Activated T-helper 2 cell treated with anti-CD3 and anti-CD28 coated beads, Interferon-gamma antibody, Interleukin-2, Interleukin-4, amounts not matched to agents 10 μg/mL and 5 μg/mL and 100 μg/mL, durations not matched to agents 14 hours and 24 hours and 36 hours (primary cell): ENCODE measurements at regions of chr11 and their contacts with region 1.

Region 1: DNA sequence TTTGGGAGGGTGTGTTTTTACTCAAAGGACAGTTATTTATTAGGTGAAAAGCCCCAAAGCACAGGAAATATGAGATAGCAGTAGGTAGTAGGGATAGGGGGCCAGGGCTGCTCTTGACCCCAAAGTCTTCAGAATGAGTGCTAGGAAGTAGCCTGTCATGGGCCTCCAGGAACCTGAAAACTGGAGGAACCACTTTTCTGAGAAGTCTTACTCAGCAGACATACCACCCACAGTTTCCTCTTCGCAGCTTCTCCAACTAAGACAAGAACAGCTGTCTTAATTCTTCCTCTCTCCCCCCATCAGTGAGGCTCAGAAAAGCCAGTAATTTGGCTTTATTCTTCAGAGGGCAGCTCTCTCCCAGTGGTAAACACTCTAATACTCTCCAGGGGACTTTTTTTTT is 84.0 kb upstream of the CTSC start:
- DNase-seq: peak; percentile 24
- H3K4me3 Mint-ChIP-seq: peak overlapping the region; percentile 66
- H3K27ac Mint-ChIP-seq: peak overlapping the region; percentile 87
- H3K4me1 Mint-ChIP-seq: peaks cover 62% of the 10 kb centered on the region
- H3K27me3 Mint-ChIP-seq: no peaks in the 10 kb centered on the region

Region 2: GRCh38 chr11:88179971-88180629 is 241.4 kb before region 1 on chr11:
- intact Hi-C with region 1: loop called (anchors 2 kb)
- DNase-seq: no peak
- H3K4me3 Mint-ChIP-seq: no peak overlapping the region
- H3K27ac Mint-ChIP-seq: no peak overlapping the region
- H3K4me1 Mint-ChIP-seq: peaks cover 35% of the 10 kb centered on the region
- H3K27me3 Mint-ChIP-seq: peaks cover 46% of the 10 kb centered on the region

Region 3: GRCh38 chr11:88337181-88337986 is 84.1 kb before region 1 on chr11 and contains the start of gene CTSC:
- intact Hi-C with region 1: loop called (anchors 2 kb)
- DNase-seq: peak; percentile 91
- H3K4me3 Mint-ChIP-seq: peak within 1 kb of the TSS; percentile 96
- H3K27ac Mint-ChIP-seq: peak within 1 kb of the TSS; percentile 96
- H3K4me1 Mint-ChIP-seq: peaks cover 58% of the 10 kb centered on the region
- H3K27me3 Mint-ChIP-seq: no peaks in the 10 kb centered on the region
- total RNA-seq, gene CTSC: 82.4 and 82.6 TPM in 2 replicates

Region 4: DNA sequence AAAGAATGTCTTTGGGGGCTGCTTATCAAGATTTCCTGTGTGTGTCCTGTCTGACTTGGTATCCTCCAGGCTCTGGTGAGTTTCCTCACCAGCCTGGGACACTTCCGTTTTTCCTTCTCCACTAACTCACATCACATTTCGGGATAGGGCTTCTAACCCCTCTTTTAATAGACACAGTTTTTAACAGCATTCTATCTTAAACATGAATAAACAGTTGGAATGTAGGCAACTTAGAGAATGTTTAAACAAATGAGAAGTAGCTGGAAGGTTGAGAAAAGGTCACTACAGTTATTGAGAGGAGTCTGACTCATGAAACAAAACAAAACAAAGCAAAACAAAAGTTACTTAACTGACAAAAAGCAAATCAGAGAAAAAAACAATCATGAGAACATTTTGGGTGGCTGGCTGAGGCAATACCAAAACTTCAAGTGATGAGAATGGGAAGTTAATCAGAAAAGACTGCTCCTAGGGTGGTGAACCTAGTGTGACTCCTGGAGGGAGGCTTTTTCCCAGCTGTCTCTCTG is 19.3 kb before region 1 on chr11:
- intact Hi-C with region 1: loop called (anchors 2 kb)
- DNase-seq: no peak
- H3K4me3 Mint-ChIP-seq: no peak overlapping the region
- H3K27ac Mint-ChIP-seq: peak overlapping the region; percentile 1
- H3K4me1 Mint-ChIP-seq: peaks cover 31% of the 10 kb centered on the region
- H3K27me3 Mint-ChIP-seq: no peaks in the 10 kb centered on the region

Region 5: DNA sequence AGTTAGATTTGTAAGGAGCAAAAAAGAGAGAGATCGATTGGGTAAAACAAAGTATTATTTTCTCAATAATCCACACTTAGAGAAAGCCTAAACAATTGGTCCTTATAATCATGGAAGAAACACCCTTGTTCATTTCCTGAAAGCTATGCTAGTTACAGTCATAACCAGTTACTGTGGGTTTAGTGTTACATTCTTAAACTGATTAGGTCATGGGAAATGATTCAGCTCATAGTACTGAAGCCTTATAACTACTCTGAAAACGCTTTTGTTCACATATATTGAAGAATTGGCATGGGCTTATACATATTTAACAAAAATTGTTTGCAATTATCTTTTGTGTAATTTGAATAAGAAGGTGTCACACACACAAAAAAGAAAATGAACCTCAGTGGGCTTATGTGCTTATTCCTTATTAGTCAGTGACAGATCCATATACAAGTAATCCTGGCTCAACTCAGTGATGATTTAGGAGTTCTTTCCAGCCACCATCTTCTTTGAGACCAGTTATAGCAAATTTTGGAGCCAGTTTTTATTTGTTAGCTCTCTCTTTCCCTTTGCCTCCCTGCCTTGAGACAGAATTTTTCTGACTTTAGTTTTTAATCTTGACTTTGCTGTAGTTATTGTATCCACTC is 114.5 kb after region 1 on chr11:
- intact Hi-C with region 1: loop called (anchors 1 kb)
- DNase-seq: no peak
- H3K4me3 Mint-ChIP-seq: no peak overlapping the region
- H3K27ac Mint-ChIP-seq: peak overlapping the region; percentile 16
- H3K4me1 Mint-ChIP-seq: peaks cover 20% of the 10 kb centered on the region
- H3K27me3 Mint-ChIP-seq: peaks cover 5% of the 10 kb centered on the region